ENCODE measurements at regions of chrX and their contacts with region 1.

Region 1: DNA sequence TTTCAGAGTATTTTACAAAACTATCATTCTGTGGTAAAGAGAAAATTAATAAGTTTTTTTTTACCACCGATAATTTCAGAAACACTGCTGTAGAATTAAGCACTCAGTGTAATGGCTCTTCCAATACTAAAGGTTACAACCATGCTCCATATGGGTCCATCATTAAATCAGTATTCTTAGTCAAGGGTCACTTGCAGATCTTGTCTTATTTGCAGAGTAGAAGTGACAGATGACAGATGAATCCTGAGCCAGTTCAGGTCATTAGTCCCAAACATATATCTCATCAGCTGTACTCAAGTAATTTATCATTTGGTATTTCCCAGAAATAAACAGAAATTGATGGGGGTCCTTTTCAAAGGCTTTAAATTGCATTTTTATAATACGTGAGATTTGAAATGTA is 182.9 kb downstream of the CFAP47 start:
- DNase-seq: no peak
- ATAC-seq: no peak
- H3K4me3 ChIP-seq: no peak overlapping the region
- H3K27ac ChIP-seq: no peak overlapping the region
- H3K4me1 ChIP-seq: no peaks in the 10 kb centered on the region
- H3K27me3 ChIP-seq: no peaks in the 10 kb centered on the region
- CTCF ChIP-seq: no peak
- EP300 ChIP-seq: no peak
- POLR2A ChIP-seq: no peak
- RAD21 ChIP-seq: no peak

Region 2: GRCh38 chrX:36787752-36788151 is 685.3 kb after region 1 on chrX:
- CTCF ChIA-PET with region 1: no interaction called
- POLR2A ChIA-PET with region 1: no interaction called
- RAD21 ChIA-PET with region 1: no interaction called
- SMC1A ChIA-PET with region 1: no interaction called
- in situ Hi-C with region 1: no loop called
- intact Hi-C with region 1: loop called (anchors 5 kb)
- DNase-seq: no peak
- ATAC-seq: no peak
- H3K4me3 ChIP-seq: no peak overlapping the region
- H3K27ac ChIP-seq: no peak overlapping the region
- H3K4me1 ChIP-seq: no peaks in the 10 kb centered on the region
- H3K27me3 ChIP-seq: no peaks in the 10 kb centered on the region
- CTCF ChIP-seq: no peak
- EP300 ChIP-seq: no peak
- POLR2A ChIP-seq: no peak
- RAD21 ChIP-seq: no peak

Measured in GM12878 (cell line).